Stomach (tissue), 19 donors: ENCODE measurements at regions of chr15 and their contacts with region 1.

Region 1: DNA sequence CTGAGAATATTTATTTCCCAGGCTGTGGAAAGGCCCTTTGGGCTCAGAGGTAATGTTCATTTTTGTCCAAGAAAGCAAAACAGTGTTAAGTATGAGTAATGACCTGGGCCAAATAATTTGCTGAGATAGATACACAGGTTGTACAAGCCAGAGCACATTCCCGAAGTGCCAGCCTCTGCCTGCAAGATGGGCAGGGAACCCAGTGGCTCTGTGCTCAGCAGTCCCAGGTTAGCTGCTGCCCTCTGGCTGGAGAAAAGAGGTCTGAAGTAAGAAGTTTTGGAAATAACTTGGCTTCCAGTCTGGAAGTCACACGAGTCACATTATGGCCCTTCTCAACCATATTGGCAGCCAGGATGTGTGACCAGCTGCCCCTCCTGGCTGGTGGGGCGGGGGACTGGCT is 20.2 kb downstream of the MYZAP start:
- DNase-seq: peak; percentile 82 to 85
- H3K4me3 ChIP-seq: no peak overlapping the region
- H3K27ac ChIP-seq: peak overlapping the region; percentile 70 to 83 (median 80)
- H3K4me1 ChIP-seq: peaks cover 30 to 67% (median 44%) of the 10 kb centered on the region in 4 donors
- H3K27me3 ChIP-seq: no peaks in the 10 kb centered on the region
- CTCF ChIP-seq: peak in 3 of 7 experiments; percentile 52 to 81 (median 54)
- EP300 ChIP-seq: no peak
- POLR2A ChIP-seq: no peak

Region 2: DNA sequence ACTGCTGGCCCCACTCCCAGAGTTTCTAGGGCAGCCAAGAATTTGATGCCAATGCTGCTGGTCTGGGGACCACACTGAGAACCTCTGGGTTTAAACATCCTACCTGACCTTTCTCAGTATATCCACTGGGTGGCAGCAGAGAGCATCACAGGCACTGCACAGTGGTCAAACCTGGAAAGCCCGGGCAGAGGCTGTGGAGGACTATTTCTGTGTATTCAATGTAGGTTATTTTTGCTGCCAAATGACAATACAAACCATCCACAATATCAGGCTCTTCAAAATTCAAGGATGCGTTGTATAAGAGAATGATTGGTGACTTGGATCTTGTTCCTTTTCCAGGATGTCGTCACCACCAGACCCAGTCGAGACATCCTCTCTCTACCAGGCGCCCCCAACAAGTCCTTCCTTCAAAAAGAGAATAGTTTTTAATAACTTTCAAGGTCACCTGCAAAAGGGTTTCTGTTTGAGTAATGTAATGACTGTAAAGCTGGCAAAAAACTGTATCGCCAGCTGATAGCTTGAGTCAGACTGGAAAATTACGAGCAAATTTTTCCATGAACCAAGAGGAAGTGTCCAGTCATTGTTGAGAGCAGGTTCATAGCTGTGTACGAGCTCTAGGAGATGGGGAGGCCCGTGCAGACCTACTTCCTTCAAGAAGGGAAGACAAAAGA is 50.8 kb before region 1 on chr15:
- intact Hi-C with region 1: loop called (anchors 10 kb)
- DNase-seq: peak; percentile 87 to 92
- H3K4me3 ChIP-seq: no peak overlapping the region
- H3K27ac ChIP-seq: peak overlapping the region in 4 of 5 donors; percentile 4 to 37 (median 32)
- H3K4me1 ChIP-seq: peaks cover 6 to 26% (median 18%) of the 10 kb centered on the region in 4 donors
- H3K27me3 ChIP-seq: no peaks in the 10 kb centered on the region
- CTCF ChIP-seq: peak in 6 of 7 experiments; percentile 46 to 94 (median 88)
- EP300 ChIP-seq: no peak
- POLR2A ChIP-seq: no peak